HCT116 (cell line): ENCODE measurements at regions of chr20 and their contacts with region 1.

Region 1: GRCh38 chr20:8790442-8791074 is 278.3 kb upstream of the PLCB4 start:
- DNase-seq: peak; percentile 24
- ATAC-seq: peak; percentile 70
- H3K4me3 ChIP-seq: no peak overlapping the region
- H3K27ac ChIP-seq: no peak overlapping the region
- H3K4me1 ChIP-seq: peaks cover 0 to 4% of the 10 kb centered on the region in 2 experiments; a peak in 1 of 4 replicates
- H3K27me3 ChIP-seq: no peaks in the 10 kb centered on the region
- CTCF ChIP-seq: peak; percentile 53 to 96 (median 85); a peak in 5 of 6 replicates
- POLR2A ChIP-seq: no peak
- RAD21 ChIP-seq: peak; percentile 66

Region 2: DNA sequence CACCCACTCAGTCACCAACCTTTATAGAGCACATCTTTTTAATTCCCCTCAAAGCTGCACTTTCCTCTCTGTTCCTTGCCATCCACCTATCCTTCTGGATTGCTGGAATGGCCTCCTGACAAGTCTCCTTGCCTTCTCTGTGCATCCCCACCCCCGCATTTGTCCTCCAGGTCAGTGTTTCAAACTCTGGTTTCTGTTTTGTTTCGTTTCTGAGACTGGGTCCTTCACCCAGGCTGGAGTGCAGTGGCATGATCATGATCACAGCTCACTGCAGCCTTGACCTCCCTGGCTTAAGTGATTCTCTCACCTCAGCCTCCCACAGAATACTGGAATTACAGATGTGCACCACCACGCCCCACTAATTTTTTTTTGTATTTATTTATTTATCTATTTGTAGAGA is 562.2 kb before region 1 on chr20:
- CTCF ChIA-PET with region 1: no interaction called
- POLR2A ChIA-PET with region 1: no interaction called
- RAD21 ChIA-PET with region 1: no interaction called
- intact Hi-C with region 1: no loop called
- DNase-seq: no peak
- ATAC-seq: no peak
- H3K4me3 ChIP-seq: no peak overlapping the region
- H3K27ac ChIP-seq: no peak overlapping the region
- H3K4me1 ChIP-seq: no peaks in the 10 kb centered on the region
- H3K27me3 ChIP-seq: no peaks in the 10 kb centered on the region
- CTCF ChIP-seq: no peak
- POLR2A ChIP-seq: no peak
- RAD21 ChIP-seq: no peak

Region 3: DNA sequence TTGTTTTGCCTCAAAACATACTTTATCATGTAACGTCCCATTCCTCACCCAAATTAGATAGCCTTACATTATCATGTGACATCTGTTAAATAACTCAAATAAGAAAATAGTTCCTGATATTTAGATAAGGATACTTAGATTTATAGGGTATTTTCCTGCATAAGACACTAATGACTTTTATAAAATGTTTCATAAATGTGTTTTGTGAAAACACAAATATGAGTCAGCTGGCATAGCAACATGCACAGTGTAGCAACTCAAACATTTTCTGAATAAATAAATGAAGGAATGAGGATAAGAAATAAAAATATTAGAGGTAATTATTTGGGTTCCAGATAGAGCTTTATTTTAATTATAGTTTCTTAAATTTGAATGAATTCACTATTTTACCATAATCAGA is 182.1 kb before region 1 on chr20:
- CTCF ChIA-PET with region 1: no interaction called
- POLR2A ChIA-PET with region 1: no interaction called
- RAD21 ChIA-PET with region 1: no interaction called
- intact Hi-C with region 1: no loop called
- DNase-seq: no peak
- ATAC-seq: no peak
- H3K4me3 ChIP-seq: no peak overlapping the region
- H3K27ac ChIP-seq: no peak overlapping the region
- H3K4me1 ChIP-seq: no peaks in the 10 kb centered on the region
- H3K27me3 ChIP-seq: no peaks in the 10 kb centered on the region
- CTCF ChIP-seq: no peak
- POLR2A ChIP-seq: no peak
- RAD21 ChIP-seq: no peak

Region 4: DNA sequence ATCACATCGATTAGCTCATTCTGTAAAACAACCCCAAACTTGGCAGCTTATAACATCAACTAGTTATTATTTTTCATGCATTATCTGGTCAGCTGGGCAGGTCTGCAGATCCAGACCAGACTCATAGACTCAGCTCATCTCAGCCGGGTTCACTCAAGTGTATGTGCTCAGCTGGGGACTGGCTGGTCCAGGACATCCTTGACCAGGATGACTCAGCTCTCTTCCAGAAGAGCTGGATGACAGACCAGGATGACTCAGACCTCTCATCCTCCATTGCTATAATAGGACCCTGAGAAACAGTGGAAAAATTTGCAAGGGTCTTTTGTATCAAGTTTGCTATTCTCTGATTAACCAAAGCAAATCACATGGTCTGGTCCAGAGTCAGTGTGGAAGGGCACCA is 34.1 kb before region 1 on chr20:
- CTCF ChIA-PET with region 1: interaction called, 10 read pairs
- POLR2A ChIA-PET with region 1: no interaction called
- RAD21 ChIA-PET with region 1: no interaction called
- intact Hi-C with region 1: no loop called
- DNase-seq: peak; percentile 18
- ATAC-seq: peak; percentile 85
- H3K4me3 ChIP-seq: no peak overlapping the region
- H3K27ac ChIP-seq: no peak overlapping the region
- H3K4me1 ChIP-seq: peaks cover 3 to 15% of the 10 kb centered on the region in 2 experiments; a peak in 3 of 4 replicates
- H3K27me3 ChIP-seq: no peaks in the 10 kb centered on the region
- CTCF ChIP-seq: no peak
- POLR2A ChIP-seq: no peak
- RAD21 ChIP-seq: no peak